ENCODE measurements at regions of chr19 and their contacts with region 1.

Region 1: GRCh38 chr19:13012690-13013608 is 17.7 kb downstream of the NFIX start:
- DNase-seq: no peak
- H3K4me3 ChIP-seq: no peak overlapping the region
- H3K27ac ChIP-seq: no peak overlapping the region
- H3K4me1 ChIP-seq: peaks cover 4 to 28% of the 10 kb centered on the region in 2 experiments; a peak in 3 of 4 replicates
- H3K27me3 ChIP-seq: no peaks in the 10 kb centered on the region
- CTCF ChIP-seq: no peak
- EP300 ChIP-seq: no peak
- RAD21 ChIP-seq: no peak

Region 2: DNA sequence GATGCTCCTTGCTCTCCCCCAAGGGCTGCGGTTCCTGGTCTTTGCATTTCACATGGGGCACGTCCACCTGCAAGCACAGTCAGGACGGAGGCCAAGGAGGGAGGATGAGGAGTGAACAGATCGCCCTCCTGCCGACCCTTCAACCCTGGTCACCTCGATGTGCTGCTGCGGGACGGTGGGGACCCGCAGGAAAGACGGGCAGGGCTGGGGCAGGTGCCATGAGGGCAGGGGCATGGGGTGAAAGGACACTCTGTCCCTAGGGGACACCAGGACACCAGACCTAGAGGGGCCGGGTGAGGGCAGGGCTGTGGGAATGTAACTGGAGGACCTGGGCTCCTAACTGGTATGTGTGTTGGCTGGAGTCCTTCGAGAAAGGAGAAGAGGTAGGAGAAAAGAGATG is 94.7 kb before region 1 on chr19:
- CTCF ChIA-PET with region 1: no interaction called
- POLR2A ChIA-PET with region 1: no interaction called
- DNase-seq: no peak
- H3K4me3 ChIP-seq: no peak overlapping the region
- H3K27ac ChIP-seq: no peak overlapping the region
- H3K4me1 ChIP-seq: peaks cover 0 to 10% of the 10 kb centered on the region in 2 experiments; a peak in 1 of 4 replicates
- H3K27me3 ChIP-seq: no peaks in the 10 kb centered on the region
- CTCF ChIP-seq: no peak
- EP300 ChIP-seq: no peak
- RAD21 ChIP-seq: no peak

Region 3: GRCh38 chr19:13002166-13002898 is 10.6 kb before region 1 on chr19:
- CTCF ChIA-PET with region 1: interaction called, 14 read pairs
- POLR2A ChIA-PET with region 1: no interaction called
- DNase-seq: peak; percentile 41
- H3K4me3 ChIP-seq: no peak overlapping the region
- H3K27ac ChIP-seq: no peak overlapping the region
- H3K4me1 ChIP-seq: peaks cover 0 to under 1% of the 10 kb centered on the region in 2 experiments; a peak in 1 of 4 replicates
- H3K27me3 ChIP-seq: no peaks in the 10 kb centered on the region
- CTCF ChIP-seq: no peak
- EP300 ChIP-seq: no peak
- RAD21 ChIP-seq: no peak

Region 4: DNA sequence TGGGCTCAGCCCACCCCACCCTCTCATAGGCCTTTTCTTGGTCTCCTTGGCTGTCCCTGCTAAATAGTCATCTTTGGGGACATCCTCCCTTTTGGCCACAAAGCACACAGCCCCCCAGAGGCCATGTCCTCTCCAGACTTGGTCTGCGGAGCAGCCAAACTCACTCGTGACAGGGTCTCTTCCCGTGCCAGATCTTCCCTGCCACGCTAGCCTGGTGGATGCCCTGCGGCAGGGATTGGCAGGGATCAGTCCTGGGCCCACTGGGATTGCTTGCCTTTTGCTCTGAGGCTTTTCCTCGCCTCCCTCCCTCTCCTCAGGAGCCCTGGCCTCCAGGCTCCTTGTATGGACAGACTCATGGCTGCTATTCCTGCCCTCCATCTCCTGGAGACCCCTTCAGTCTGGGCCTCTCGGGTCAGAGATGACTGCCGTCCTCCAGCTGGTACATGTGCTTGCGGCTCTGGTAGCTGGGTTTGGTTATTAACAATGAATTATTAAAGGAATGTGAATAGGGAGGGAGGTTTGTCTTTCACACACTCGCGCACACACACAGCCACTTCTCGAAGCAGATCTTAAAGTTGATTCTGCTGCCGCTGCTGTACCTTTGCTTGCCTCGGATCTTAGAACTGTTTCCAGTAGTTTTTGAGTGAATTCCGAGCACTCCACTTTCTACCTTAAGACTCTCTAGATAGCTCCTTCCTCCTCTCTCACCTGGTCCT is 27.4 kb after region 1 on chr19:
- CTCF ChIA-PET with region 1: no interaction called
- POLR2A ChIA-PET with region 1: no interaction called
- DNase-seq: no peak
- H3K4me3 ChIP-seq: no peak overlapping the region
- H3K27ac ChIP-seq: peak overlapping the region in 1 of 2 experiments; percentile 8; a peak in 1 of 4 replicates
- H3K4me1 ChIP-seq: peaks cover 44 to 55% of the 10 kb centered on the region in 2 experiments; a peak in 3 of 4 replicates
- H3K27me3 ChIP-seq: no peaks in the 10 kb centered on the region
- CTCF ChIP-seq: no peak
- EP300 ChIP-seq: no peak
- RAD21 ChIP-seq: no peak